Activated B cell treated with CpG ODN at 0.5 μM for 24 hours (primary cell): ENCODE measurements at regions of chr17 and their contacts with region 1.

Region 1: GRCh38 chr17:70144260-70144846 is 25.0 kb upstream of the KCNJ2 start:
- DNase-seq: no peak
- ATAC-seq: no peak
- H3K4me3 Mint-ChIP-seq: no peak overlapping the region
- H3K27ac Mint-ChIP-seq: no peak overlapping the region
- H3K4me1 Mint-ChIP-seq: no peaks in the 10 kb centered on the region
- H3K27me3 Mint-ChIP-seq: no peaks in the 10 kb centered on the region
- CTCF ChIP-seq: peak; percentile 70

Region 2: DNA sequence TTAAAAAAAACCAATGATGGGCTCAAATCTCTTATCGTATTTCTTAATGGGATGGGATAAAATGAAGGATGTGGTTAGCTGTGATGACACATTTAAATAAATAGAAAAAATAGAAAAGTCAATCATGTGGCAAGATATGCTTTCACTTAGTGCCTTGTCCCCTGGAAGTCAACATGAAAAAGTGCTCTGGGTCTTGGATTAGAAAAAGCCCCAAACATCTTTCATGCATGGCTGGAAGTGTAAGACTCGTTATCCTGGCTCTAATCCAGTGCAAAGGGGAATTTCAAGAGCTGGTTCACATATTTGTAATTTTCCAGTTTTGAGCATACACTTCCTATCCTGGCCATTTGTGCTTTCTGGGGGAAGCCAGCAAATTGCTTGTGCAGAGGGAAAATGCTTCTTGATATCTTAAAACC is 569.0 kb before region 1 on chr17:
- CTCF ChIA-PET with region 1: interaction called, 16 read pairs
- POLR2A ChIA-PET with region 1: no interaction called
- intact Hi-C with region 1: no loop called
- DNase-seq: no peak
- ATAC-seq: no peak
- H3K4me3 Mint-ChIP-seq: no peak overlapping the region
- H3K27ac Mint-ChIP-seq: no peak overlapping the region
- H3K4me1 Mint-ChIP-seq: peaks cover 28% of the 10 kb centered on the region
- H3K27me3 Mint-ChIP-seq: peaks cover 6% of the 10 kb centered on the region
- CTCF ChIP-seq: no peak

Region 3: GRCh38 chr17:69607162-69607834 is 537.1 kb before region 1 on chr17:
- CTCF ChIA-PET with region 1: interaction called, 6 read pairs
- POLR2A ChIA-PET with region 1: no interaction called
- intact Hi-C with region 1: loop called (anchors 1 kb)
- DNase-seq: no peak
- ATAC-seq: no peak
- H3K4me3 Mint-ChIP-seq: no peak overlapping the region
- H3K27ac Mint-ChIP-seq: no peak overlapping the region
- H3K4me1 Mint-ChIP-seq: peaks cover 4% of the 10 kb centered on the region
- H3K27me3 Mint-ChIP-seq: peaks cover 2% of the 10 kb centered on the region
- CTCF ChIP-seq: no peak

Region 4: GRCh38 chr17:70110443-70110880 is 33.9 kb before region 1 on chr17:
- CTCF ChIA-PET with region 1: no interaction called
- POLR2A ChIA-PET with region 1: no interaction called
- intact Hi-C with region 1: no loop called
- DNase-seq: no peak
- ATAC-seq: no peak
- H3K4me3 Mint-ChIP-seq: no peak overlapping the region
- H3K27ac Mint-ChIP-seq: no peak overlapping the region
- H3K4me1 Mint-ChIP-seq: no peaks in the 10 kb centered on the region
- H3K27me3 Mint-ChIP-seq: peaks cover 2% of the 10 kb centered on the region
- CTCF ChIP-seq: no peak

Region 5: GRCh38 chr17:70132505-70132904 is 11.8 kb before region 1 on chr17:
- CTCF ChIA-PET with region 1: interaction called, 10 read pairs
- POLR2A ChIA-PET with region 1: no interaction called
- intact Hi-C with region 1: no loop called
- DNase-seq: no peak
- ATAC-seq: no peak
- H3K4me3 Mint-ChIP-seq: no peak overlapping the region
- H3K27ac Mint-ChIP-seq: no peak overlapping the region
- H3K4me1 Mint-ChIP-seq: peaks cover 8% of the 10 kb centered on the region
- H3K27me3 Mint-ChIP-seq: no peaks in the 10 kb centered on the region
- CTCF ChIP-seq: no peak

Region 6: DNA sequence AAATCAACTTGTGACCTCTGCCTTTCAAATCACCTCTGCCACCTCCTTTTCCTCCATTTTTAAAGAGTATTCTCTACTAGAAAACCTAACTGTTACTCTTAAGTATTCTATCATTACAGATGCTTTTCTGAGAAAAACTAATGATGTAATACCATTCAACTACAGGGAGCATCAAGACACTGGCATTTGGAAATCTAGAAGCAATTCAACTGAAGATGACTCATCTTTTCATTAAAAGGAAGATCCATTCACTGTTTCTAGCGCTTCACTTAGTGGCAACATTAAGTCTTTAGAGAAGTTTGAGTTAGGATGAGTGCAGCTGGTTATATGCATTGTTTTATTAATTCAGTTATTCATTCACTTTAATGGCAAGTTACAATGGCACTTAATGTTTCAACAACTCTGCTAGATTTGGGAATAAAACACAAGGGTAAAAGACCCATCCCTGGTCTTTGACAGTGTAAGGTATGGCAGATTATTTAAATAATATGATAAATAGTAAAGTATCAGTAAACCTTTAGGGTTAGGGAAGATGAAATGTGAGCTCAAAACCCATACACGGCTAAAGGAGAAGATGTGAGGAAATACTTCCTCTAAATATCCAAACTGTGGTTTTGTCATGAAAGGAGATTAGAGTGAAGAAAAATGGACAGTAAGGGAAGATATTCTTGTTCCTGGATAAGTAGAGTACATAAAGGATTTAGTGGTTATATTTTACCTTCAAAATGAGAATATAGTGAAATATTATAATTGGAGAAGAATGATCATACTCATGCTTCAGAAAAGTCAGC is 86.7 kb after region 1 on chr17:
- CTCF ChIA-PET with region 1: no interaction called
- POLR2A ChIA-PET with region 1: no interaction called
- intact Hi-C with region 1: no loop called
- DNase-seq: no peak
- ATAC-seq: no peak
- H3K4me3 Mint-ChIP-seq: no peak overlapping the region
- H3K27ac Mint-ChIP-seq: no peak overlapping the region
- H3K4me1 Mint-ChIP-seq: no peaks in the 10 kb centered on the region
- H3K27me3 Mint-ChIP-seq: no peaks in the 10 kb centered on the region
- CTCF ChIP-seq: no peak